ENCODE measurements at regions of chr1 and their contacts with region 1.

Region 1: GRCh38 chr1:33007190-33008050 is 29.3 kb downstream of the AK2 start:
- DNase-seq: peak; percentile 94
- H3K4me3 Mint-ChIP-seq: no peak overlapping the region
- H3K27ac Mint-ChIP-seq: peak overlapping the region; percentile 89
- H3K4me1 Mint-ChIP-seq: peaks cover 61% of the 10 kb centered on the region
- H3K27me3 Mint-ChIP-seq: no peaks in the 10 kb centered on the region
- CTCF ChIP-seq: peak; percentile 61

Region 2: GRCh38 chr1:32876341-32877210 is 130.8 kb before region 1 on chr1:
- CTCF ChIA-PET with region 1: interaction called, 6 read pairs
- POLR2A ChIA-PET with region 1: no interaction called
- intact Hi-C with region 1: loop called (anchors 1 kb)
- DNase-seq: peak; percentile 58
- H3K4me3 Mint-ChIP-seq: no peak overlapping the region
- H3K27ac Mint-ChIP-seq: no peak overlapping the region
- H3K4me1 Mint-ChIP-seq: peaks cover 7% of the 10 kb centered on the region
- H3K27me3 Mint-ChIP-seq: peaks cover 10% of the 10 kb centered on the region
- CTCF ChIP-seq: peak; percentile 86

Region 3: DNA sequence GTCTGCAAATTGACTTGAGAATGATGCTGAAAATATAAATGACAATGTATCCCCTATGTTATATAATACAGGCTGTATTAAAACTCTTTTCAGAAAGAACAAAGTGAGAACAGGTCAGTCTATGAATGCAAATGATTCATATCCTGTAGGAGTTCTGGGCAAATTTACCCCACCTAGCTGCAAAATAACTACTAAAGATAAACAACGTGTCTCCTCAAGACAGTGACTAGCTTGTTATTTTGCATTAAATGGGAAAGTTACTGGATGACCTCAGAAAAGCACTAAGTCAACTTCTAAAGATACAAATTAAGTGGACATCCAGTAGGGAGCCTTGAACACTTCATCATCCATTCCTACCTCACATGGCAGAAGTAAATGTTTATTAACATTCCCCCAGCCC is 53.9 kb before region 1 on chr1:
- CTCF ChIA-PET with region 1: interaction called, 41 read pairs
- POLR2A ChIA-PET with region 1: interaction called, 25 read pairs
- intact Hi-C with region 1: no loop called
- DNase-seq: peak; percentile 70
- H3K4me3 Mint-ChIP-seq: no peak overlapping the region
- H3K27ac Mint-ChIP-seq: peak overlapping the region; percentile 87
- H3K4me1 Mint-ChIP-seq: peaks cover 14% of the 10 kb centered on the region
- H3K27me3 Mint-ChIP-seq: no peaks in the 10 kb centered on the region
- CTCF ChIP-seq: no peak

Region 4: DNA sequence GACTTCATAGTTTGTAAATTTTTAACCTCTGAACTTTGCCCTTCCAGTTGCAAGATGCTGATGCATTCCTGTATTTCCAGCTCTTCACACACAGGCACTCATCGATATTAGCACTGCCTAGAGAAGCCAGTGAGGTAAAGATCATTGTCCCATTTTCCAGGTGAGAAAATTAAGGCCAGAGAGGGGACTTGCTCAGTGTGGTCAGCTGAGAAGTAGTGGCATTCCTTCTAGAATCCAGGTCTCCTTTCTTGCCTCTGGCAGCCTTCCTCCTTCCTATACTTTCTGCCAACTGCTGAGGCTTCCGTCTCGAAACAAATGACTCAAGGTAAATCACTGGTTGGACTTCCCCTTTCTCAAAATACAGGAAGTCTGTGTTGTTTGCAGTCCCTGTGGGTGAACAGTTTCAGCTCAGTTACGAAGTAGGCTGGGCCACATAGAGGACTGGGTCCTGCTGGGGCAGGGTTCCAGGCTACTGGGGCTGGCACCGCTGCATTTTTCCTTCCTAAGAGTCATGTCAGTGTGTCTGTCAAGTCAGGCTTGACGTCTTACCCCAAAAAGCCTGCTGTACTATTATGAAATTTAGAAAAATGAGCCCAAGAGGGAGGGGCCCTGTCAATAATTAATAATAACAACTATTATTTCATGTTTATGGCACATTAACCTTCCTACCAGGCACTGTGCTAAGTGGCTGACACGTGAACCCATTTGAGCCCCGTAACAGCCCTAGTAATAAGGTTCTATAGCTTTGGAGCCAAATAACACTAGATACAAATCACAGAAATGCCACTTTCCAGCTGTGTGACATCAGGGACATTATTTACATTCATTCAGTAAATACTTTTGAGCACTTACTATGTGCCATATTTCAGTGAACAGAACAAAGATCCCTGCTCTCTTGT is 26.2 kb before region 1 on chr1:
- CTCF ChIA-PET with region 1: interaction called, 6 read pairs
- POLR2A ChIA-PET with region 1: interaction called, 248 read pairs
- intact Hi-C with region 1: no loop called
- DNase-seq: peak; percentile 95
- H3K4me3 Mint-ChIP-seq: peak overlapping the region; percentile 6
- H3K27ac Mint-ChIP-seq: peak overlapping the region; percentile 95
- H3K4me1 Mint-ChIP-seq: peaks cover 14% of the 10 kb centered on the region
- H3K27me3 Mint-ChIP-seq: no peaks in the 10 kb centered on the region
- CTCF ChIP-seq: no peak

Region 5: GRCh38 chr1:33036526-33037503 is 29.4 kb after region 1 on chr1 and contains the start of gene AK2:
- CTCF ChIA-PET with region 1: interaction called, 7 read pairs
- POLR2A ChIA-PET with region 1: interaction called, 31 read pairs
- intact Hi-C with region 1: no loop called
- DNase-seq: peak; percentile 99
- H3K4me3 Mint-ChIP-seq: peak within 1 kb of the TSS; percentile 98
- H3K27ac Mint-ChIP-seq: peak within 1 kb of the TSS; percentile 95
- H3K4me1 Mint-ChIP-seq: peaks cover 26% of the 10 kb centered on the region
- H3K27me3 Mint-ChIP-seq: no peaks in the 10 kb centered on the region
- CTCF ChIP-seq: no peak
- total RNA-seq, gene AK2: 286 and 390 TPM in 2 replicates

Region 6: GRCh38 chr1:33086384-33086850 is 79.0 kb after region 1 on chr1:
- CTCF ChIA-PET with region 1: interaction called, 11 read pairs
- POLR2A ChIA-PET with region 1: interaction called, 4 read pairs
- intact Hi-C with region 1: loop called (anchors 5 kb)
- DNase-seq: peak; percentile 80
- H3K4me3 Mint-ChIP-seq: no peak overlapping the region
- H3K27ac Mint-ChIP-seq: no peak overlapping the region
- H3K4me1 Mint-ChIP-seq: peaks cover 14% of the 10 kb centered on the region
- H3K27me3 Mint-ChIP-seq: no peaks in the 10 kb centered on the region
- CTCF ChIP-seq: peak; percentile 84

Measured in MCF 10A (cell line).